CD4-positive, alpha-beta T cell (primary cell): ENCODE measurements at regions of chr1 and their contacts with region 1.

Region 1: GRCh38 chr1:198620951-198621824 is 17.7 kb upstream of the PTPRC start:
- DNase-seq: peak; percentile 43 to 89 (median 55)
- ATAC-seq: peak; percentile 78
- H3K4me3 ChIP-seq: peak overlapping the region; percentile 44
- H3K4me3 Mint-ChIP-seq: peak overlapping the region; percentile 74
- H3K27ac ChIP-seq: peak overlapping the region; percentile 83 to 84
- H3K27ac Mint-ChIP-seq: peak overlapping the region; percentile 90
- H3K4me1 ChIP-seq: peaks cover 59% of the 10 kb centered on the region
- H3K4me1 Mint-ChIP-seq: peaks cover 77% of the 10 kb centered on the region
- H3K27me3 ChIP-seq: no peaks in the 10 kb centered on the region
- H3K27me3 Mint-ChIP-seq: no peaks in the 10 kb centered on the region
- CTCF ChIP-seq: no peak

Region 2: DNA sequence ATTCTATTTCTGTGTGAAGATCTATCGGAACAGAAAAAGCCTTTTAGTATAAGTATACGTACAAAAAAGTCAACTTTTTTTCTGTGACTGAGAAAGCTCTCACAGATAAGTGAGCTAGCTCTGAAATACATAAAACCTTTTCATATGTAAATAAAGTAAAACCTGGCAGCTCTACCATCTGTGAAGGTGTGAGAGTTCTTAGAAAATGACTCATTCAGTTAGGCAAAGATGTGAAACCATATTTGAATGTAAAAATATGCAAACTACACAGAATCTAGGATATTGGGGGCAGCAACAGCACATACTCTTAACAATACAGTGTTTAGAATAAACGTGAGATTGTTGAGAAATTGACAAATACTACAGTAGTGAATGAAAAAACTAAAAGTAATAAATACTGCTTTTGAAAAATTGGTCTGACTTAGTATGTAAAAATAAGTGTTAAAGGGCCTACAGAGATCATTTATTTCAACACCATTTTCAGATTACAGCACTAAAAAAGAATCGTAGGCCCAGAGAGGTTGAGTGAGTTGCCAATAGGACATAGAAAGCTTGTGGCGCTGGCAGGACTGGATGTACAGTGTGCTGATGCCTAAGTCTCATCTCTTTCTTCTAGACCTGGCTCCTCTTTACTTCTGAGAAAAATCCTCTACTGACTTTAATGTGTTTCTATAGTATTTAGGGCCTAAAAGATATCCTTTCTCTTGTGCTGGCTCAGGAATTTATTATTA is 100.5 kb before region 1 on chr1:
- CTCF ChIA-PET with region 1: interaction called, 3 read pairs
- POLR2A ChIA-PET with region 1: interaction called, 39 read pairs
- intact Hi-C with region 1: loop called in 1 of 2 experiments (anchors 2 kb)
- DNase-seq: peak in 3 of 14 experiments; percentile 44 to 74 (median 50)
- ATAC-seq: peak; percentile 52
- H3K4me3 ChIP-seq: peak overlapping the region; percentile 38
- H3K4me3 Mint-ChIP-seq: peak overlapping the region; percentile 79
- H3K27ac ChIP-seq: peak overlapping the region; percentile 48 to 60
- H3K27ac Mint-ChIP-seq: peak overlapping the region; percentile 93
- H3K4me1 ChIP-seq: peaks cover 20% of the 10 kb centered on the region
- H3K4me1 Mint-ChIP-seq: peaks cover 82% of the 10 kb centered on the region
- H3K27me3 ChIP-seq: no peaks in the 10 kb centered on the region
- H3K27me3 Mint-ChIP-seq: no peaks in the 10 kb centered on the region
- CTCF ChIP-seq: no peak

Region 3: GRCh38 chr1:198534548-198535418 is 86.4 kb before region 1 on chr1:
- CTCF ChIA-PET with region 1: interaction called, 4 read pairs
- POLR2A ChIA-PET with region 1: interaction called, 21 read pairs
- intact Hi-C with region 1: no loop called
- DNase-seq: no peak
- ATAC-seq: peak; percentile 48
- H3K4me3 ChIP-seq: peak overlapping the region; percentile 6
- H3K4me3 Mint-ChIP-seq: peak overlapping the region; percentile 64
- H3K27ac ChIP-seq: peak overlapping the region; percentile 14 to 74
- H3K27ac Mint-ChIP-seq: peak overlapping the region; percentile 90
- H3K4me1 ChIP-seq: peaks cover 12% of the 10 kb centered on the region
- H3K4me1 Mint-ChIP-seq: peaks cover 84% of the 10 kb centered on the region
- H3K27me3 ChIP-seq: no peaks in the 10 kb centered on the region
- H3K27me3 Mint-ChIP-seq: no peaks in the 10 kb centered on the region
- CTCF ChIP-seq: no peak

Region 4: GRCh38 chr1:198598796-198599321 is 22.3 kb before region 1 on chr1:
- CTCF ChIA-PET with region 1: interaction called, 6 read pairs
- POLR2A ChIA-PET with region 1: interaction called, 22 read pairs
- intact Hi-C with region 1: no loop called
- DNase-seq: peak in 1 of 14 experiments; percentile 26
- ATAC-seq: peak; percentile 58
- H3K4me3 ChIP-seq: no peak overlapping the region
- H3K4me3 Mint-ChIP-seq: peak overlapping the region; percentile 77
- H3K27ac ChIP-seq: peak overlapping the region in 1 of 2 donors; percentile 29
- H3K27ac Mint-ChIP-seq: peak overlapping the region; percentile 91
- H3K4me1 ChIP-seq: peaks cover 27% of the 10 kb centered on the region
- H3K4me1 Mint-ChIP-seq: peaks cover 93% of the 10 kb centered on the region
- H3K27me3 ChIP-seq: no peaks in the 10 kb centered on the region
- H3K27me3 Mint-ChIP-seq: no peaks in the 10 kb centered on the region
- CTCF ChIP-seq: no peak

Region 5: DNA sequence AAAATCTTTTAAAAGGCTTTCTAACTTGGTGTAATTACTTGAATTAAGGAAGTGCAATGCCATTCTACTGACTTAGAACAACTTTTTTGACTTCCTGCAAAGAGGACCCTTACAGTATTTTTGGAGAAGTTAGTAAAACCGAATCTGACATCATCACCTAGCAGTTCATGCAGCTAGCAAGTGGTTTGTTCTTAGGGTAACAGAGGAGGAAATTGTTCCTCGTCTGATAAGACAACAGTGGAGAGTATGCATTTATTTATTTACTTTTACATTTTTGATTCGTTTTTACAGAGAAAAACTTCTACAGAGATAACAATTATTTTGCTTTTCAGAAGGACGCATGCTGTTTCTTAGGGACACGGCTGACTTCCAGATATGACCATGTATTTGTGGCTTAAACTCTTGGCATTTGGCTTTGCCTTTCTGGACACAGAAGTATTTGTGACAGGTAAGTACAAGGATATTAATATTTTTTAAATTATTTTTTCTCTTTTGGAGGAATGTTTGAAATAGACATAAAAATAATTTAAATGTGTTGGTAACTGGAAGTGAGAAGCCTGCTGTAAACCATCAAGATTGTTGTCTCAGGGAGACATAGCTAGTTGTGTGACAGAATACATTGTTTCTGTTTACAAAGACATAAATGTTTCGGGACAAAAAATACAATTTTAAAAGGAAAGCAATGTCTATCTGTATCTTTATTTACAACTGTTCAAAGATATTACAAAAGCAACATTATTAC is 17.9 kb after region 1 on chr1 and contains the start of gene PTPRC:
- CTCF ChIA-PET with region 1: interaction called, 29 read pairs
- POLR2A ChIA-PET with region 1: interaction called, 268 read pairs
- intact Hi-C with region 1: loop called in 1 of 2 experiments (anchors 1 kb)
- DNase-seq: peak in 4 of 14 experiments; percentile 35 to 88 (median 76)
- ATAC-seq: peak; percentile 83
- H3K4me3 ChIP-seq: peak within 1 kb of the TSS; percentile 79
- H3K4me3 Mint-ChIP-seq: peak within 1 kb of the TSS; percentile 95
- H3K27ac ChIP-seq: peak within 1 kb of the TSS; percentile 67 to 77
- H3K27ac Mint-ChIP-seq: peak within 1 kb of the TSS; percentile 98
- H3K4me1 ChIP-seq: peaks cover 20% of the 10 kb centered on the region
- H3K4me1 Mint-ChIP-seq: peaks cover 62% of the 10 kb centered on the region
- H3K27me3 ChIP-seq: no peaks in the 10 kb centered on the region
- H3K27me3 Mint-ChIP-seq: no peaks in the 10 kb centered on the region
- CTCF ChIP-seq: no peak
- total RNA-seq, gene PTPRC: 661 to 698 TPM

Region 6: GRCh38 chr1:198657550-198658064 is 36.4 kb after region 1 on chr1:
- CTCF ChIA-PET with region 1: no interaction called
- POLR2A ChIA-PET with region 1: interaction called, 148 read pairs
- intact Hi-C with region 1: loop called in 1 of 2 experiments (anchors 2 kb)
- DNase-seq: peak in 5 of 14 experiments; percentile 21 to 85 (median 78)
- ATAC-seq: peak; percentile 25
- H3K4me3 ChIP-seq: peak overlapping the region; percentile 22
- H3K4me3 Mint-ChIP-seq: peak overlapping the region; percentile 66
- H3K27ac ChIP-seq: peak overlapping the region; percentile 81 to 85
- H3K27ac Mint-ChIP-seq: peak overlapping the region; percentile 90
- H3K4me1 ChIP-seq: peaks cover 25% of the 10 kb centered on the region
- H3K4me1 Mint-ChIP-seq: peaks cover 69% of the 10 kb centered on the region
- H3K27me3 ChIP-seq: no peaks in the 10 kb centered on the region
- H3K27me3 Mint-ChIP-seq: no peaks in the 10 kb centered on the region
- CTCF ChIP-seq: no peak

Region 7: GRCh38 chr1:198693321-198693720 is 72.1 kb after region 1 on chr1:
- CTCF ChIA-PET with region 1: interaction called, 5 read pairs
- POLR2A ChIA-PET with region 1: interaction called, 16 read pairs
- intact Hi-C with region 1: no loop called
- DNase-seq: no peak
- ATAC-seq: peak; percentile 48
- H3K4me3 ChIP-seq: no peak overlapping the region
- H3K4me3 Mint-ChIP-seq: peak overlapping the region; percentile 70
- H3K27ac ChIP-seq: no peak overlapping the region
- H3K27ac Mint-ChIP-seq: peak overlapping the region; percentile 82
- H3K4me1 ChIP-seq: peaks cover 17% of the 10 kb centered on the region
- H3K4me1 Mint-ChIP-seq: peaks cover 88% of the 10 kb centered on the region
- H3K27me3 ChIP-seq: no peaks in the 10 kb centered on the region
- H3K27me3 Mint-ChIP-seq: no peaks in the 10 kb centered on the region
- CTCF ChIP-seq: no peak